WTC11 (cell line): ENCODE measurements at regions of chr17 and their contacts with region 1.

Region 1: DNA sequence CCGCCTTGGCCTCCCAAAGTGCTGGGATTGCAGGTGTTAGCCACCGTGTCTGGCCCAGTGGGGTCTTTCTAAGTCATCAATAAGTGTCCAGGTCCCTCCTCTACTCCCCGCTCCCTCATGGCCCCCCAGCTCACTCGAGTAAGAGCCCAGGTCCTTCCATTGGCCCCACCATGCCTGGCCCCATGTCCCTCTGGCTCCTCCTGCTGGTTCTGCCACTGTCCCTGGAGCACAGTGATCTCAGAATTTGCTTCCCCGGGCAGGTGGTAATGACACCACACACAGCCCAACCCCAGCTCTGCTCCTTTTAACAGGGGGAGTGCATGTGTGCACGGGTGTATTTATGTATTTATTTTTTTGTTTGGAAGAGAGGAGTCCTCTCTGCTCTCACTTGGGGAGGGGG is 19.6 kb downstream of the MGAT5B start:
- DNase-seq: no peak
- ATAC-seq: 0 out of 2 replicates have a peak, but pooled peaks have one; percentile 15
- H3K4me3 Mint-ChIP-seq: no peak overlapping the region
- H3K27ac Mint-ChIP-seq: peak overlapping the region; percentile 4; the same call in 1 of the 2 replicates
- H3K4me1 Mint-ChIP-seq: peaks cover 24% of the 10 kb centered on the region
- H3K27me3 Mint-ChIP-seq: no peaks in the 10 kb centered on the region
- CTCF ChIP-seq: no peak

Region 2: DNA sequence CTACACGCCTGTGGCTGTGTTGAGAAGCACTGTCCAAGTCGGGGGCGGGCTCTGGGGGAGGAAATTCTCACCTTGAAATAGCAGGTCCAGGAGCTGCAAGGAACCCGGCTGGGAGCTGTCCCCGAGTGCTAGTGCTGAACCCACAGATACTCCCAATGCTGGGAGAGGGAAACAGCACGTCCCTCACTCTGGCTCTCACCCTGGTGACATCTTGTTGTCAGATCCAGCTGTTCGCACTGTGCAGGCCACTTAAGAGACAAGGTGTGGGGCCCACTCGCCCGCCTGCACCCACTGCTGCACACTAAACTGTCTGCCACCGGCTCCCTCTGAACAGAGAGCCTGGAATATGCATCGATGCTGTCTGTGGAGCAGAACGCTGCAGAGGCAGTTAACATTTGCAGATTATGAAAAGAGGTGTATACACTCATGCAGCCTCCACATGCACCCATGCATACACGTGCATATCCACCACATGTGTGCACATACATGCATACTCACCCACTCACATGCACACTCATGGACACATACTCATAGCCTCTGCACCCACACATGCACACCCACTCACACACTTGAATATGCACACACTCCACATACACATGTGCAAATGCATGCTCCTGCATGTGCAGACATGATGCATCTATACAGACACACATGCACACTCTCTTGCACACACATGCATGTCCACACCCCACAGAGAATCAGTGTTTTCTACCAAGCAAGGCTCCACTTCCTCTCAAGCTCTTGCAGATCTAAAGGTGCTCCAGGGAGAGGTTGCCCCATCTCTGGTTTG is 22.4 kb after region 1 on chr17:
- CTCF ChIA-PET with region 1: interaction called, 11 read pairs
- POLR2A ChIA-PET with region 1: no interaction called
- DNase-seq: peak; percentile 92
- ATAC-seq: peak; percentile 83
- H3K4me3 Mint-ChIP-seq: no peak overlapping the region
- H3K27ac Mint-ChIP-seq: 0 out of 2 replicates have a peak overlapping the region, but pooled peaks have one; percentile 7
- H3K4me1 Mint-ChIP-seq: peaks cover 17% of the 10 kb centered on the region
- H3K27me3 Mint-ChIP-seq: no peaks in the 10 kb centered on the region
- CTCF ChIP-seq: no peak

Region 3: DNA sequence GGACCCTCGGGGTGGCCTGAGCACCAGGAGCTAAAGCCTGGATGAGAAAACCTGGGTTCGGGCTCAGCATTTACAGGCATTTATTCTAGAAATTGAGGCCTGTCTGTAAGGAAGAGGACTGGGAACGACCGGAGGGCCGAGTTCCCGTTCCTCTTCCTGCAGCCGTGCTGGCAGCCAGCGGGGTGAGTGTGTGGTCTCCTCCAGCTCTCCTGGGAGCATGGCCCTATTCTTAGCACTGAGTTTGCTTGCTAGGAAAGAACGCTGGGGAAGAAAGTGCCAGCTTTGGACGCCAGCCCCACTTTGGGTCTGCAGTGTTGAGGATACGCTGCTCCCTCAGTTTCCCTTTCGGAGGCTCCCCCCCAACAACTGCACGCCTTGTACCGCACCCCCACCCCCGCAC is 30.0 kb after region 1 on chr17:
- CTCF ChIA-PET with region 1: interaction called, 12 read pairs
- POLR2A ChIA-PET with region 1: no interaction called
- DNase-seq: no peak
- ATAC-seq: no peak
- H3K4me3 Mint-ChIP-seq: no peak overlapping the region
- H3K27ac Mint-ChIP-seq: no peak overlapping the region
- H3K4me1 Mint-ChIP-seq: peaks cover 19% of the 10 kb centered on the region
- H3K27me3 Mint-ChIP-seq: no peaks in the 10 kb centered on the region
- CTCF ChIP-seq: no peak

Region 4: DNA sequence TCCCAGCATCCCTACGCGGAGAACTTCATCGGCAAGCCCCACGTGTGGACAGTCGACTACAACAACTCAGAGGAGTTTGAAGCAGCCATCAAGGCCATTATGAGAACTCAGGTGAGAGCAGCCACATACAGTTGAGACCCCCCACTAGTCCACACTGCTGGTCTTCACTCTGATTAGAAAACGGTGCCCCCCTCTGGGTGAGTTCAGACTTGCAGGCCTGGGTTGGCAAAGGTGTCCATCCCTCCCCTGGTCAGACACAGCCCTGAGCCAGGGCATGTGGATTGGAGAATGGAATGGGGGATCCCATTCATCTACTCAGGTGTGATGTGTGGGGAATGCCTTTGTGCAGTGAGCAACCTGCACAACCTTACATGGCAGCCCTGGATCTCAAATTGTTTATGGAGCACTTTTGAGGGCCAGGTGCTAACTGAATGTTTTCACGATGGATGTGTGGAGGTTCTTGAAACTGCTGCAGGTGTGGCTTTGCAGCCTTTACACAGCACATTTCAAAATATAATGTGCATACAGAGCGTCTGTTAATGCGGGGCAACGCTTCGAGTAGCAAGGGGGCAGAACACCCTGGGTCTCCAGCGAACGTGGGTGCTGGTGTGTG is 53.0 kb after region 1 on chr17:
- CTCF ChIA-PET with region 1: interaction called, 17 read pairs
- POLR2A ChIA-PET with region 1: interaction called, 6 read pairs
- DNase-seq: peak; percentile 85
- ATAC-seq: peak; percentile 78
- H3K4me3 Mint-ChIP-seq: 0 out of 2 replicates have a peak overlapping the region, but pooled peaks have one; percentile 7
- H3K27ac Mint-ChIP-seq: peak overlapping the region; percentile 67
- H3K4me1 Mint-ChIP-seq: peaks cover 28% of the 10 kb centered on the region
- H3K27me3 Mint-ChIP-seq: no peaks in the 10 kb centered on the region
- CTCF ChIP-seq: peak; percentile 34; the same call in 1 of the 2 replicates